HCT116 (cell line): ENCODE measurements at regions of chr12 and their contacts with region 1.

Region 1: GRCh38 chr12:42802785-42803189 is 213.2 kb upstream of the PRICKLE1 start:
- DNase-seq: no peak
- ATAC-seq: no peak
- H3K4me3 ChIP-seq: no peak overlapping the region
- H3K27ac ChIP-seq: no peak overlapping the region
- H3K4me1 ChIP-seq: no peaks in the 10 kb centered on the region
- H3K27me3 ChIP-seq: no peaks in the 10 kb centered on the region
- CTCF ChIP-seq: no peak
- POLR2A ChIP-seq: no peak
- RAD21 ChIP-seq: no peak

Region 2: DNA sequence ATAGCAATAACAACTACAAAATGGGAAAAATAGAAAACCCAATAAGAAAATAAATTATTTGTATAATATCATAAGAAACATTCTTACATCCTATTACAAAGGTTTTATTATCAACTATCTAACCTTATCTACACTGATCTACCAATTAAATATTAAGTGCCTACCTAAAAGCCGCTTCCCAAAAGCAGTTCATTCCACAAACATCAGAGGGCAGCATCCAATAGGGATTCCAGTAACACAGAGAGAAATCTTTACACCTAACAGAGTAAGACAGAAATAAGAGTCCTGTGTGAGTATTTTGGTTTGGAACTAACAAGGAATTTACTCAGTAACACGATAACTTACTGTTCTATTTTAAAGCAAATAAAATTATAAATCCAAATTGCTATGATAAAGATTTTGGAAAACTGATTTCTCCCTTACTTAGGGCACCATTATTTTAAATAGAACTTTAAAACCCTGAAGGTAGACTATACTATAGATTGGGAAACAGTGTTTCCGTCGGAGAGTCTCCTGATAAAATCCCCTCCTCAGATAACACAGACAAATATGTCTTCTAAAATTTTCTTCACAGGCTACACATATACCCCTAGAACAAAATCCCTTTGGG is 673.1 kb before region 1 on chr12:
- CTCF ChIA-PET with region 1: no interaction called
- POLR2A ChIA-PET with region 1: no interaction called
- RAD21 ChIA-PET with region 1: no interaction called
- intact Hi-C with region 1: no loop called
- DNase-seq: peak; percentile 61
- ATAC-seq: peak; percentile 88
- H3K4me3 ChIP-seq: no peak overlapping the region
- H3K27ac ChIP-seq: no peak overlapping the region
- H3K4me1 ChIP-seq: peaks cover 0 to 13% of the 10 kb centered on the region in 2 experiments; a peak in 2 of 4 replicates
- H3K27me3 ChIP-seq: no peaks in the 10 kb centered on the region
- CTCF ChIP-seq: peak; percentile 74 to 85 (median 83)
- POLR2A ChIP-seq: no peak
- RAD21 ChIP-seq: peak; percentile 91

Region 3: GRCh38 chr12:42819846-42820245 is 17.1 kb after region 1 on chr12:
- CTCF ChIA-PET with region 1: no interaction called
- POLR2A ChIA-PET with region 1: no interaction called
- RAD21 ChIA-PET with region 1: no interaction called
- intact Hi-C with region 1: loop called (anchors 2 kb)
- DNase-seq: no peak
- ATAC-seq: no peak
- H3K4me3 ChIP-seq: no peak overlapping the region
- H3K27ac ChIP-seq: no peak overlapping the region
- H3K4me1 ChIP-seq: no peaks in the 10 kb centered on the region
- H3K27me3 ChIP-seq: no peaks in the 10 kb centered on the region
- CTCF ChIP-seq: no peak
- POLR2A ChIP-seq: no peak
- RAD21 ChIP-seq: no peak

Region 4: GRCh38 chr12:42904683-42905418 is 102.1 kb after region 1 on chr12:
- CTCF ChIA-PET with region 1: no interaction called
- POLR2A ChIA-PET with region 1: no interaction called
- RAD21 ChIA-PET with region 1: no interaction called
- intact Hi-C with region 1: no loop called
- DNase-seq: no peak
- ATAC-seq: no peak
- H3K4me3 ChIP-seq: no peak overlapping the region
- H3K27ac ChIP-seq: no peak overlapping the region
- H3K4me1 ChIP-seq: no peaks in the 10 kb centered on the region
- H3K27me3 ChIP-seq: no peaks in the 10 kb centered on the region
- CTCF ChIP-seq: no peak
- POLR2A ChIP-seq: no peak
- RAD21 ChIP-seq: no peak